Prostate gland (tissue), 2 donors: ENCODE measurements at regions of chr2 and their contacts with region 1.

Region 1: GRCh38 chr2:97995734-97996624 is at the start of gene TMEM131:
- DNase-seq: peak; percentile 89
- H3K4me3 ChIP-seq: peak within 1 kb of the TSS; percentile 76 to 86
- H3K27ac ChIP-seq: peak within 1 kb of the TSS; percentile 93 to 95
- H3K4me1 ChIP-seq: no peaks in the 10 kb centered on the region
- H3K27me3 ChIP-seq: no peaks in the 10 kb centered on the region
- CTCF ChIP-seq: no peak
- POLR2A ChIP-seq: peak; percentile 93
- total RNA-seq, gene TMEM131: 40.6 to 42.0 TPM

Region 2: DNA sequence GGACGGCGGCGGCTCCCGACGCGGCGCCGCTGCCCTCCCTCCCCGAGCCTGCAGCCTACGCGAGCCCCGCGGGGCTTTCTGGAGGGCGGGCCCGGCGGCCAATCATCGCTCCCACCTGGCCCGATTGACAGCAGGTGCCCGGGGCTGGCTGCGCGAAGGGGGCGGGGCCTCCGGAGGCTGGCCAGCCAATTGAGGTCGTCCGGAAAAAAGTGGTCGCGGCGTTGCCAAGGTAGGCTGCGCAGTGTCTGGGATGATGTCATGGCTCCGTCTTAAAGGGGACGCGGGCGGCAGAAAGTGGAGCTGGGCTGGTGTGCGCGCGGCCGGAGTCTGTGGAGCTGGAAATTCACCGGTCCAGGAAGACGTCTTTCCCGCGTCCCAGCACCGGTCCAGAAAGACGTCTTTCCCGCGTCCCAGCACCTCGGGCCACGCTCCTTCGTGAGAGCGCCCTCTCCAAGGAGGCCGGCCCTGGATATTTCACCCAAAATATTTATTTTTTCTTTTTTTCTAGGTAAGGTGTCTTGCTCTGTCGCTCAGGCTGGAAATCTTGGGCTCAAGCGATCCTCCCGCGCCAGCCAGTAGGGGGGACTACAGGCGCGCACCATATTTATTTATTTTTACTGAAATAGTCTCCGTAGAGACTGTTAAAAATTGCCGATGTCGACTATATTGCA is 331.9 kb before region 1 on chr2 and contains the start of gene ACTR1B:
- intact Hi-C with region 1: loop called (anchors 10 kb)
- DNase-seq: peak; percentile 98
- H3K4me3 ChIP-seq: peak within 1 kb of the TSS; percentile 69 to 82
- H3K27ac ChIP-seq: peak within 1 kb of the TSS; percentile 93 to 95
- H3K4me1 ChIP-seq: peaks cover 14% of the 10 kb centered on the region
- H3K27me3 ChIP-seq: no peaks in the 10 kb centered on the region
- CTCF ChIP-seq: peak in 3 of 4 experiments; percentile 31 to 69 (median 61)
- POLR2A ChIP-seq: peak; percentile 97
- total RNA-seq, gene ACTR1B: 80.5 to 102 TPM

Region 3: GRCh38 chr2:97806738-97807618 is 189.0 kb before region 1 on chr2:
- intact Hi-C with region 1: loop called (anchors 5 kb)
- DNase-seq: peak; percentile 80
- H3K4me3 ChIP-seq: no peak overlapping the region
- H3K27ac ChIP-seq: no peak overlapping the region
- H3K4me1 ChIP-seq: no peaks in the 10 kb centered on the region
- H3K27me3 ChIP-seq: no peaks in the 10 kb centered on the region
- CTCF ChIP-seq: peak; percentile 85 to 94 (median 90)
- POLR2A ChIP-seq: no peak

Region 4: GRCh38 chr2:98149333-98149697 is 153.3 kb after region 1 on chr2:
- intact Hi-C with region 1: no loop called
- DNase-seq: no peak
- H3K4me3 ChIP-seq: no peak overlapping the region
- H3K27ac ChIP-seq: no peak overlapping the region
- H3K4me1 ChIP-seq: no peaks in the 10 kb centered on the region
- H3K27me3 ChIP-seq: no peaks in the 10 kb centered on the region
- CTCF ChIP-seq: peak in 1 of 4 experiments; percentile 4
- POLR2A ChIP-seq: no peak